Lower lobe of right lung (tissue), 2 donors: ENCODE measurements at regions of chr15 and their contacts with region 1.

Region 1: GRCh38 chr15:47987908-47988532 is 132.8 kb upstream of the SLC24A5 start:
- DNase-seq: no peak
- ATAC-seq: peak; percentile 87 to 94
- H3K4me3 ChIP-seq: no peak overlapping the region
- H3K27ac ChIP-seq: no peak overlapping the region
- H3K4me1 ChIP-seq: peaks cover 19% of the 10 kb centered on the region
- H3K27me3 ChIP-seq: no peaks in the 10 kb centered on the region
- CTCF ChIP-seq: peak; percentile 66

Region 2: GRCh38 chr15:47196057-47196456 is 792.0 kb before region 1 on chr15:
- intact Hi-C with region 1: loop called (anchors 10 kb)
- DNase-seq: peak; percentile 75
- ATAC-seq: peak; percentile 96 to 97
- H3K4me3 ChIP-seq: no peak overlapping the region
- H3K27ac ChIP-seq: no peak overlapping the region
- H3K4me1 ChIP-seq: no peaks in the 10 kb centered on the region
- H3K27me3 ChIP-seq: no peaks in the 10 kb centered on the region
- CTCF ChIP-seq: peak; percentile 79